ENCODE measurements at regions of chr1 and their contacts with region 1.

Region 1: GRCh38 chr1:66331657-66332547 is 202.1 kb upstream of the SGIP1 start:
- DNase-seq: peak; percentile 55
- H3K4me3 ChIP-seq: peak overlapping the region; percentile 69
- CTCF ChIP-seq: peak; percentile 49

Region 2: GRCh38 chr1:65036545-65037180 is 1295.2 kb before region 1 on chr1:
- CTCF ChIA-PET with region 1: no interaction called
- POLR2A ChIA-PET with region 1: no interaction called
- DNase-seq: no peak
- H3K4me3 ChIP-seq: no peak overlapping the region
- CTCF ChIP-seq: no peak

Region 3: GRCh38 chr1:66342707-66343106 is 10.8 kb after region 1 on chr1:
- CTCF ChIA-PET with region 1: interaction called, 19 read pairs
- POLR2A ChIA-PET with region 1: interaction called, 4 read pairs
- DNase-seq: no peak
- H3K4me3 ChIP-seq: no peak overlapping the region
- CTCF ChIP-seq: no peak

Region 4: GRCh38 chr1:66350001-66350547 is 18.2 kb after region 1 on chr1:
- CTCF ChIA-PET with region 1: interaction called, 19 read pairs
- POLR2A ChIA-PET with region 1: no interaction called
- DNase-seq: no peak
- H3K4me3 ChIP-seq: no peak overlapping the region; the same call in 1 of the 2 replicates
- CTCF ChIP-seq: no peak